Activated CD8-positive, alpha-beta memory T cell treated with anti-CD3 and anti-CD28 coated beads, Interleukin-2, amount 10 ng/mL, durations not matched to agents 7 days and 5 days (primary cell): ENCODE measurements at regions of chrX and their contacts with region 1.

Region 1: GRCh38 chrX:48539345-48540027 is at the start of gene TBC1D25:
- DNase-seq: peak; percentile 99
- ATAC-seq: peak; percentile 79
- H3K4me3 Mint-ChIP-seq: peak within 1 kb of the TSS; percentile 83
- H3K27ac Mint-ChIP-seq: peak within 1 kb of the TSS; percentile 98
- H3K4me1 Mint-ChIP-seq: peaks cover 25% of the 10 kb centered on the region
- H3K27me3 Mint-ChIP-seq: no peaks in the 10 kb centered on the region
- total RNA-seq, gene TBC1D25: 23.2 to 26.3 TPM

Region 2: GRCh38 chrX:48475774-48476577 is 63.5 kb before region 1 on chrX and contains the start of gene FTSJ1:
- CTCF ChIA-PET with region 1: interaction called, 16 read pairs
- DNase-seq: peak; percentile 94
- ATAC-seq: peak; percentile 95
- H3K4me3 Mint-ChIP-seq: peak within 1 kb of the TSS; percentile 88
- H3K27ac Mint-ChIP-seq: peak within 1 kb of the TSS; percentile 95
- H3K4me1 Mint-ChIP-seq: peaks cover 37% of the 10 kb centered on the region
- H3K27me3 Mint-ChIP-seq: no peaks in the 10 kb centered on the region
- total RNA-seq, gene FTSJ1: 72.7 to 75.4 TPM

Region 3: DNA sequence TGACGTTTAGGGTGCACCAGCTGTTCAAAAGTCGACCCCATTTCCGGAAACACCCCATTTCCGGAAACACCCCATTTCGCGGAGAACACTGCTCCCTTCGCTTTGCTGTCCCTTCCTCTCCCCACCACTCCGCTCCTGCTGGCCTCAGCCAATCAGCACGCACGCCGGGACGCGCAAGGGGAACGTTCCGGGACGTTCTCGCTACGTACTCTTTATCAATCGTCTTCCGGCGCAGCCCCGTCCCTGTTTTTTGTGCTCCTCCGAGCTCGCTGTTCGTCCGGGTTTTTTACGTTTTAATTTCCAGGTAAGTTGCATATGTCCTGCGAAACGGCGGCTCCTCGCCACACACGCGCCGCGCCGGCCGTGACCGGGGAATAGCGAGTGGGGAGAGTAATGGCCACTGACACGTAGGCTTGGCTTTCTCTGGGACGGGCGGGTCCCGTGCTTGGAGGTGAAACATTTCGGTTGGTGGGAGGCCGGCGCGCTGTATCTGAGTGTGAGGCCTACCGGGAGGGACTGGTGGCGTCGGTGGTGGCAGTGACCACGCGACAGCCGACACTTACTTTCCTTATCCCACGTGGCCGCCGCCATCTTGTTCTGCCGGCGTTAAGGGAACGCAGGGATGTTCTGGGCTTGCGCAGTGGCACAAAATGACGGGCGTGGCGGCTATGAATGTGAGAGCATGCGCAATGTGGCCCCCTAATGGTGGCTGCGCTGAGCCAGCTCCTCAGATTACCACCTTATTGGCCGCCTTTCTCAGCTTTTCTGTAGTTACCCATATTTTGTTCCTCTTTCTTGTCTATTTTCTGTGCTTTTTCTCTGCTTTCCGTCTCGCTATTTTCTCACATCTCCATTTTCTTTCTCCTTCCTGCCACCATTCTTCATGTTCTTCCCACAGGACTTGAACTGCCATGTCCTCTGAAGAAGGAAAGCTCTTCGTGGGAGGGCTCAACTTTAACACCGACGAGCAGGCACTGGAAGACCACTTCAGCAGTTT is 35.1 kb after region 1 on chrX and contains the start of gene RBM3:
- CTCF ChIA-PET with region 1: interaction called, 11 read pairs
- DNase-seq: peak; percentile 97
- ATAC-seq: peak; percentile 93
- H3K4me3 Mint-ChIP-seq: peak within 1 kb of the TSS; percentile 99
- H3K27ac Mint-ChIP-seq: peak within 1 kb of the TSS; percentile 100
- H3K4me1 Mint-ChIP-seq: peaks cover 34% of the 10 kb centered on the region
- H3K27me3 Mint-ChIP-seq: no peaks in the 10 kb centered on the region
- total RNA-seq, gene RBM3: 149 to 183 TPM